OCI-LY7 (cell line): ENCODE measurements at regions of chr5 and their contacts with region 1.

Region 1: DNA sequence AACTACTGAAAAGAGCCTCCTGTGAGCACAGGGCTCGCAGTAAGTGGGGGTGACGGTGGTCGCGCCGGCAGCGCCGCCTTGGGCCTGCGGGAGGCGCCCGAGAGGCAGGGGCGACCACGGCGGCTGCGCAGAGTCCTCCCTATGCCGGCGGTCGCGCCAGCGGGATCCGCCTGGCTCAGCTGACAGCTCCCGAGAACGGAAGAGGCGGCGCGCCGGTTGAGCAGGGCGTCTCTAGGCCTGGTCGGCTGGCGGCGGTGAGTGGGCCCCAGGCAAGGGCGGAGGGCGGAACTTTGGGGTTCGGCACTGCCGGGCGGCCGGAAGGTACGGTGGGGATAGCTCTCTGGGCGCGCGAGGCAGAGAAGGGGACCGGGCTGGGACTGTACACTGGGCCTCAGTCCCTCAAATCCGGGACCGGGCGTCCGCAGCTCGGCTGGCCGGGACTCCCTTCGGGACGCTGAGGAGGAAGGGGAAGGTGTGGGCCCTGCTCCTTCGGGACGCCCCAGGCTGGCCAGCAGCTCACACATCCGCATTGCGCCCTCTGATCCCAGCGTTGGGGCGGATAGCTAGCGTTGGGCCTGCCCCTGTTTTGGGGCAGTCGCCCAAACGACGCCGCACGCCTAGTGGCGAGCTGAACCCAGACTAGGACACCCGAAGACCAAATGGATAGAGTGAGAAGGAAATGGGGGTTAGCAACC is at the start of gene RNF14:
- DNase-seq: peak; percentile 96
- H3K4me3 ChIP-seq: peak within 1 kb of the TSS; percentile 87
- H3K27ac ChIP-seq: peak within 1 kb of the TSS; percentile 99
- H3K4me1 ChIP-seq: peaks cover 41% of the 10 kb centered on the region
- CTCF ChIP-seq: peak; percentile 88
- total RNA-seq, gene RNF14: 23.7 and 31.7 TPM in 2 replicates

Region 2: DNA sequence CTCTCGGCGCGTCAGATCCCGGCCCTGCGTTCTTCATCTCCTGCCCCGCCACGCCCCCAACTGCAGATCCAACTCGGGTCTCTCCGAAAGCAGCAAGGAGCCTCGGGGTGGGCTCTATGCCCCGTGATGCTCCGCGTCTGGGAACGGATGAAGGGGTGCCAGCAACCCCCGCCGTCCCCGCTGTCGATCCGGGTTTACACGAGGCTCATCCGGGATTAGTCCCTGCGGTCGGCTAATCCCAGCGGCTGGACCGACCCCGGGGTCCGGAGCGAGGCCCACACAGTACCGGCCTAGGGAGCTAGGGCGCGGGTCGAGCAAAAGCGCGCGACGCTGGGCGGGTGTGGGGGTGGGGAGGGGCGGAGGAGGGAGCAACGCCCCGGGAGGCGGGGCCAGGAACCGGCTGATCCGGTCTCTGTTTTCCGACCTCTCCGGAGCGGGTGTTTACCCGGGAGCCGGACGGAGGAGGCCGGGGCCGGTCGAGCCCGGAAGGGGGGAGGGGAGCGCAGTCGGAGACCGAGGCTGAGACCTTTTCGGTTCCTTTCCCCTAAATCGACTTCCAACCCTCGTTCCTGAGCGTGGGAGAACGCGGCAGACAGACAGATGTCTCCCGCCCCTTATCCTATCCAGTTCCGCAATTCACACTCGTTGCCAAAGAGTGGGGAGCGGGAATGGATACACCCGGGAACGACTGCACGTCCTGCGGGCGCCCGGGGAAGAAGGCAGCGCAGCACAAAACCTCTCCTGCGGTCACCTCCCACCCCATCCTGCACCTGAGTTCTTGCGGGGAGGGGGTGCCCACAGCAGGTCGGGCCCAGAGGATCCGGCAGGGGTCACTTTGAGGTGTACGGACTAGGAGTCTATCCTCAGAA is 119.5 kb before region 1 on chr5:
- CTCF ChIA-PET with region 1: no interaction called
- POLR2A ChIA-PET with region 1: no interaction called
- intact Hi-C with region 1: loop called (anchors 2 kb)
- DNase-seq: peak; percentile 87
- H3K4me3 ChIP-seq: peak overlapping the region; percentile 71
- H3K27ac ChIP-seq: peak overlapping the region; percentile 83
- H3K4me1 ChIP-seq: peaks cover 45% of the 10 kb centered on the region
- CTCF ChIP-seq: peak; percentile 26; the same call in 1 of the 2 replicates

Region 3: DNA sequence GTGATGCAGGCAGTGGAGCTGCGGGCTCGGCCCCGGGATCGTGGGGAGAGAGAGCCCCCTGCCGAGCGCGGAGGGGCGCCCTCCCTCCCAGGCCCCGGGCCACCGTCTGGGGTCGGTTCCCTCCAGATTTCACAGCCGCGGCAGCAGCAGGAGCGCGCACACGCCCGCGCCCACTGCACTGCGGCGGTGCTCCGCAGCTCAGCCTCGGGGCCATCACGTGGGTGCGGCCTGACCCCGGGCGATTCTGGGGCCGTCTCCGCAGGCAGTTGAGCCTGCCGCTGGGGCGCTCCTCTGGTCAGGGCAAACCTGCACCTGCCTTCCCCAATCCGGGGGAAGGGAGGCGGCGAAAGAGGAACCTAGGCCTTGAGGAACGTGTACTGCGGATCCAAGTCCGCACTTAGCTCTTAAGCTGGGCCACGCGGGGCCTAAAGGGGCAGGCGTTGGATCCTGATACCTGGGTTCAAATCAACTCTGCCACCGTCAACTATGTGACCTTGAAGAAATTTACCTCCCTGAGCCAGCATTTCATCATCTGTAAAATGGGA is 54.8 kb before region 1 on chr5:
- CTCF ChIA-PET with region 1: interaction called, 4 read pairs
- POLR2A ChIA-PET with region 1: interaction called, 23 read pairs
- intact Hi-C with region 1: no loop called
- DNase-seq: peak; percentile 31
- H3K4me3 ChIP-seq: peak overlapping the region; percentile 5
- H3K27ac ChIP-seq: no peak overlapping the region
- H3K4me1 ChIP-seq: peaks cover 36% of the 10 kb centered on the region
- CTCF ChIP-seq: peak; percentile 66

Region 4: DNA sequence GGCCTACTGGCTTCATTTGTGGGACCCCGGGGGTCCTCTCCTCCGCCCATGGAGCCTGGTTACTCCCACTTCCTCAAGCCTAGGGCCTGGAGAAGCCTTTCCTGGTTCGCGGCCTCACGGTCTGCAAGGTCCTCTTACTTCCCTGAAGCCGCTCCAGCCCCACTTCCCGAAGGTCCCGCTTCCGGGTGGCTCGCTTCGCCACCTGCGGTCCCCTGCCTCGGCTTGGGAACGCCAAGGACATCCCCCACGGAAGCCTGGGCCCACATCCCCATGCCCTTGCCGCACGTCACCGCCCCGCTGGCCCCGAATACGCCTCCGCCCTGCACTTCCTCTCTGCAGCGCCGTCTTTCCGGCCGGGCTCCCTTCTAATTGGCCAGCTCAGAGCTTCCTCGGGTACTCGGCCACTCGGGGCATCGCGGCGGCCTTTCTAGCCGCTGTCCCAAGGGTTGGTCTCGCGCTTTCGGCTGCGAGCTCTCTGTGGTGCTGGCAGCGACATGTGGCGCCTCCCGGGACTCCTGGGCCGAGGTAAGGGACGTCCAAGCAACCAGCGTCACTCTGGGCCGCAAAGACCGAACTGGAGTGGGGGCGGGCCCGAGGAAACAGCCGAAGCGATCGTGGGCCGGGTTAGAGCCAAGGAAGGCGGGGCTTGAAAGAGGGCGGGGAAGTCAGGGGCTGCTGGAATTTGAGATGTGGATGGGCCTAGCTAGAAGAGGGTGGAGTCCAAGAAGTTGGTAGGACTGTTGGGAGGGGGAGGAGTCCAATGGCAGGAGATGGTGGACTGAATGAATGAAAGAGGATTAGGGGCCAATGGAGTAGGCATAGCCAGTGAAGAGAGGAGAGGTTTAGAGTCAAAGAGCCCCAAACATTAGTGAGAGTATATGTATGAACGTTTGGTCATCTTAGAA is 45.4 kb before region 1 on chr5 and contains the start of gene DELE1:
- CTCF ChIA-PET with region 1: interaction called, 5 read pairs
- POLR2A ChIA-PET with region 1: interaction called, 29 read pairs
- intact Hi-C with region 1: loop called (anchors 2 kb)
- DNase-seq: peak; percentile 90
- H3K4me3 ChIP-seq: peak within 1 kb of the TSS; percentile 93
- H3K27ac ChIP-seq: peak within 1 kb of the TSS; percentile 69
- H3K4me1 ChIP-seq: peaks cover 12% of the 10 kb centered on the region
- CTCF ChIP-seq: no peak
- total RNA-seq, gene DELE1: 67.9 and 81.2 TPM in 2 replicates

Region 5: GRCh38 chr5:141992349-141992963 is 23.4 kb after region 1 on chr5:
- CTCF ChIA-PET with region 1: no interaction called
- POLR2A ChIA-PET with region 1: interaction called, 11 read pairs
- intact Hi-C with region 1: no loop called
- DNase-seq: peak; percentile 73
- H3K4me3 ChIP-seq: no peak overlapping the region
- H3K27ac ChIP-seq: no peak overlapping the region
- H3K4me1 ChIP-seq: no peaks in the 10 kb centered on the region
- CTCF ChIP-seq: peak; percentile 95

Region 6: GRCh38 chr5:142012792-142013388 is 43.8 kb after region 1 on chr5 and contains the start of gene GNPDA1:
- CTCF ChIA-PET with region 1: interaction called, 3 read pairs
- POLR2A ChIA-PET with region 1: interaction called, 20 read pairs
- intact Hi-C with region 1: no loop called
- DNase-seq: peak; percentile 84
- H3K4me3 ChIP-seq: peak within 1 kb of the TSS; percentile 87
- H3K27ac ChIP-seq: peak within 1 kb of the TSS; percentile 45
- H3K4me1 ChIP-seq: peaks cover 44% of the 10 kb centered on the region
- CTCF ChIP-seq: peak; percentile 28; the same call in 1 of the 2 replicates
- total RNA-seq, gene GNPDA1: 20.2 and 22.9 TPM in 2 replicates